ENCODE measurements at regions of chrX and their contacts with region 1.

Region 1: DNA sequence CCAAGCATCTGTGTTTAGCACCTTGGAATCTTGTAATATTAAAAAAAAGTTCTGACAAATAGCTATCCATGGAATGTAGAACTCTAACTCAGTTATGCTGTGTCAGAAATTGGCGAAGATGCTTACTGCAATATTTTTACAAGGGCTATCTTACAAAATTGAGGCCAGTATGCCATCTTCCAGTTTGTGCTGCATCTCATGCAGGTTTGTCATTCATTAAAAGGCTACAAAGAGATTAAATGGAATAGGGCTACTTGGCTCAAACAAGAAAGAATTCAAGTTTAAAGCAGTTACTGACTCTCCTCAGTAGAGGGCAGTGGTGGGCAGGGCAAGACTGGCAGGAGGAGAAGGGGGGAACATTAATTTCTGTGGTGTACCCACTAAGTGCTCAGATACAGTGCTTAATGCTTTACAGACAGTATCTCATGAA is 66.5 kb downstream of the SHROOM4 start:
- DNase-seq: no peak
- H3K4me3 ChIP-seq: no peak overlapping the region
- CTCF ChIP-seq: no peak
- POLR2A ChIP-seq: no peak

Region 2: GRCh38 chrX:50988649-50989048 is 241.2 kb after region 1 on chrX:
- intact Hi-C with region 1: loop called (anchors 10 kb)
- DNase-seq: no peak
- H3K4me3 ChIP-seq: no peak overlapping the region
- CTCF ChIP-seq: no peak
- POLR2A ChIP-seq: no peak

Measured in lower leg skin (tissue), 4 donors.